ENCODE measurements at regions of chr7 and their contacts with region 1.

Region 1: GRCh38 chr7:135274495-135275268 is 41.0 kb downstream of the STRA8 start:
- DNase-seq: peak; percentile 89
- ATAC-seq: peak; percentile 92
- H3K4me3 Mint-ChIP-seq: no peak overlapping the region
- H3K27ac Mint-ChIP-seq: no peak overlapping the region
- H3K4me1 Mint-ChIP-seq: peaks cover 2% of the 10 kb centered on the region
- H3K27me3 Mint-ChIP-seq: peaks cover 2% of the 10 kb centered on the region
- CTCF ChIP-seq: peak; percentile 83

Region 2: DNA sequence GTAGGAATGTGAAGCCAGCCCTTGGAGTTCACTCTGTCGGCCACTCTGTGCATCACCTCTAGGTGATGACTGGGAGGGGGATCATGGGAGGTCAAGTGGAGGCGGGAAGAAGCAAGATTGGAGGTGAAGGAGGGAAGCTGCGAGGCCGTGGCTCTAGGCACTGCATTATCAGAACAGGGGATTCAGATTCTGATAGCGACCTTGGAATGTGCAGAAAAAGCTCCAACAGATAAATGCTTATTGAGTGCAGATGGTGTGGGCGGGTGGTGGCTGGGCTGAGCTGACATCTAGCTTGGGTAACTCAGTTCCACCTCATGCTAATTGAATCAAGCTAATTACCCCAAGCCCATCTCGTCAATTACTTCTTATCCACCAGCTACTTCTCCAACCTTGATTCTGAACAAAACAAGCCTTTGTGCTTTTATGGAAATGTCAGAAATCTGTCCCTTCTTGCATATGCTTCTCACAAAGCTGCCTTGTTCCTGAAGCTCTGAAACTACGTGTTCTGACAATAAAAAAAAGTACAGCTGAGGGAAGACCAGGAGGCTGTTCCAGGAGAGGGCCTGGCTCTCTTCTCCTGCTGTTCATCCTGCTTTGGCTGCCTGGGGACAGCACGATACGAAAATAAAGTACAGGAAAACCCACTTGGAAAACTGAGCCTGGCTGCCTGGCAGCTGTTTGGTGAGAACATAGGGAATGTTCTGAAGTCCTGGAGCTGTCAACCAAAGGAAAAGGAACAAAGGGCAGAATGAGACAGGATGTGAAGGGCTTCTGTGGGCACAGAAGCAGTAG is 13.6 kb before region 1 on chr7:
- CTCF ChIA-PET with region 1: interaction called, 44 read pairs
- POLR2A ChIA-PET with region 1: no interaction called
- intact Hi-C with region 1: no loop called
- DNase-seq: no peak
- ATAC-seq: no peak
- H3K4me3 Mint-ChIP-seq: no peak overlapping the region
- H3K27ac Mint-ChIP-seq: no peak overlapping the region
- H3K4me1 Mint-ChIP-seq: no peaks in the 10 kb centered on the region
- H3K27me3 Mint-ChIP-seq: peaks cover 2% of the 10 kb centered on the region
- CTCF ChIP-seq: no peak

Region 3: DNA sequence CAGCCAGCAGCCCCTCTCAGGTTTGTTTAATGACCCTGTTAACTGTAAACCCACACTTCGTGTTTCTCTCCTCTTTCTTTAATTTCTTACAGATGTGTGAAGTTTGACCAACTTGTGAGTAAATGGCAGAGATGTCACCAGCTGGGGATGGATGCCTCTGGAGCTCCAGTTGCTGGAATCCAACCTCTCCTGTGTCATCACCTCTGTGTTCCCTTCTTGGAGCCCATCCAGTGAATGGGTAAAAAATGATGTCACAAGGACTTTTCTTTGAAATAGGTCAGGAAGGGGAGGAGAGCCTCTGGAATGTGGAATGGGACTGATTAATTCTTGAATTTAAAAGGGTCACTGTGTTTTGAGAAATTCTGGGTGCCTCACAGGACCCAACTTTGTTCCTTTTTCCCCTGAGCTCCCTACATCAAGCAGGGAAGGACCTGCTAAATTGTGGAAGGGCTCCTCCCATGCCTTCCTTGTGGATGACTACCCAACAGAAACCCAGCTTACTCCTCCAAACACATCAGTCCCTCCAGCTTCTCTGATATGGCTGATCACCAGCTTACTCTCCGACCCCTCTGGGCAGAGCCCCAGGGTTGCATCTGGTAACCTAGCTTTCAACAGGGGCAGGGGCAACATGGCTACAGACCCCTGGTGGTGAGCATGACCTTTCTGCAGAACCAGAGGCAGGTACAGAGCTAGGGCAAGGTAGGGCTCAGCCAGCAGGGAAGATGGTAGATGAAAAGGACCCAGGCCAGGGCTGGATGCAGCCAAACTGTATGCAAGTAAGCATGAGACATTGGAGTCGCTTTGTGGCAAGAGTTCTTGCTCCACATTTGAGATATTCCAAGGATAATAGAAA is 26.5 kb after region 1 on chr7:
- CTCF ChIA-PET with region 1: interaction called, 11 read pairs
- POLR2A ChIA-PET with region 1: no interaction called
- intact Hi-C with region 1: no loop called
- DNase-seq: no peak
- ATAC-seq: no peak
- H3K4me3 Mint-ChIP-seq: no peak overlapping the region
- H3K27ac Mint-ChIP-seq: no peak overlapping the region
- H3K4me1 Mint-ChIP-seq: no peaks in the 10 kb centered on the region
- H3K27me3 Mint-ChIP-seq: peaks cover 1% of the 10 kb centered on the region
- CTCF ChIP-seq: no peak

Region 4: GRCh38 chr7:135335628-135336139 is 61.0 kb after region 1 on chr7:
- CTCF ChIA-PET with region 1: interaction called, 62 read pairs
- POLR2A ChIA-PET with region 1: interaction called, 5 read pairs
- intact Hi-C with region 1: no loop called
- DNase-seq: peak; percentile 69
- ATAC-seq: peak; percentile 63
- H3K4me3 Mint-ChIP-seq: no peak overlapping the region
- H3K27ac Mint-ChIP-seq: no peak overlapping the region
- H3K4me1 Mint-ChIP-seq: peaks cover 3% of the 10 kb centered on the region
- H3K27me3 Mint-ChIP-seq: no peaks in the 10 kb centered on the region
- CTCF ChIP-seq: no peak

Region 5: GRCh38 chr7:135512135-135512887 is 237.6 kb after region 1 on chr7:
- CTCF ChIA-PET with region 1: no interaction called
- POLR2A ChIA-PET with region 1: no interaction called
- intact Hi-C with region 1: no loop called
- DNase-seq: peak; percentile 34
- ATAC-seq: peak; percentile 22
- H3K4me3 Mint-ChIP-seq: no peak overlapping the region
- H3K27ac Mint-ChIP-seq: no peak overlapping the region
- H3K4me1 Mint-ChIP-seq: peaks cover 7% of the 10 kb centered on the region
- H3K27me3 Mint-ChIP-seq: no peaks in the 10 kb centered on the region
- CTCF ChIP-seq: peak; percentile 78

Region 6: DNA sequence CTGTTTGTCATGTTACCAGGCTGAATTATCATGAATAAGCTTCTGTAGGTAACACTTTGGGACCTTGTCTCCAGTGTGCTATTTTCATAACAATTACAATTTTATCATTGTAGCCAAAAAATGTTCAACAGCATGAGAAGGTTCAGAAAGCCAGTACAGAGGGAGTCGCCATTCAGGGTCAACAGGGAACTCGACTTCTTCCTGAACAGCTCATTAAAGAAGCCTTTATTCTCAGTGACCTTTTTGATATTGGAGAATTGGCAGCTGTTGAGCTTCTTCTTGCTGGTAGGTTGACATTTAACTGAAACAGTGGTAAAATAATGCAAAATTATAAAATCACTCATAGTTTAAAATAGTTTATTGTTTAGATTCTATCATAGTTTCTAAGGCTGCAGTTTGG is 298.9 kb after region 1 on chr7:
- CTCF ChIA-PET with region 1: interaction called, 17 read pairs
- POLR2A ChIA-PET with region 1: no interaction called
- intact Hi-C with region 1: no loop called
- DNase-seq: no peak
- ATAC-seq: no peak
- H3K4me3 Mint-ChIP-seq: no peak overlapping the region
- H3K27ac Mint-ChIP-seq: no peak overlapping the region
- H3K4me1 Mint-ChIP-seq: peaks cover 11% of the 10 kb centered on the region
- H3K27me3 Mint-ChIP-seq: no peaks in the 10 kb centered on the region
- CTCF ChIP-seq: no peak

Measured in activated CD8-positive, alpha-beta T cell treated with anti-CD3 and anti-CD28 coated beads for 36 hours (primary cell).